Right ventricle myocardium inferior (tissue), 1 donor: ENCODE measurements at regions of chr1 and their contacts with region 1.

Region 1: DNA sequence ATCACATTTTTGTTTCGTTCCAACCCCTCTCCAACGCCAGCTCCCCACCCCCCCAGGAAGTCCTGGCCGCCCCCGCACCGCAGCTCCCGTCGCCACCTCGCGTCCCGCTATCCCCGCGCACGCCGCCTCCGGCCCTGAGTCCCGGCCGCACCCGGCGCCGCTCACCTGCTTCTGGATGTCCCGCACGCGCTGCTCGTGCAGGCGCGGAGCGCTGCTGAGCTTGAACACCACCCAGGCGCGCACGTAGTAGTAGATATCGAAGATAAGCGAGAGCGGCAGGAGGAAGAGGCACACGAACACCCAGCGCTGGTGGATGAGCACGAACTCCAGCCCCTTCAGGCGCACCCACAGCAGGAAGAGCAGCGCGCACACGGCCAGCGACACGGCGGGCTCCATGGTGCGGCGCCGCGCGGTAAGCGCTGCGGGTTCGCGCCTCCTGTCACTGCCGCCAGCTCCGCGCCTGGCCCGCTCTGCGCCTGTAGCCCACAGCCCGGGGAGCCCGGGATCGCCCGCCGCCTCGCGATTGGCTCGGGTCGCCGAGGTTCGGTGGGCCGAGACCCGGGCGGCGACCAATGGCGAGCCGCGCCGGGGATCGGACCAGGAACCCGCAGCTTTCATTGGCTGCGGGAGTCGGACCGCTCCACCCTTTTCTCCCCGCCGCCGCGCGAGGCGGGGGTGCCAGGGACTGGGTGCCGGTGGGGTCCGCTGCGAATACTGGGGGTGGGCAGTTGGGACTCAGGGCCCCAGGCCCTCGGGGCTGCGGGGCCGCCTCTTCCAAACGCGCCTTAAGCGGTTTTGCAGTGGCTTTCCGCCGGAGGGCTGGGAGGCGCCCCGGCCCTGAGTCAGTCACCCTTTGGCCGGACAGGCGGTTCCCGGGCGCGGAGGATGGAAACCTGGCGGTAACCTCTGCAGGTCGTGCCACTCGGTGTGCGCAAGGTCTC is at the start of gene DHCR24:
- DNase-seq: peak; percentile 92
- ATAC-seq: peak; percentile 98
- total RNA-seq, gene DHCR24: 12.0 TPM

Region 2: DNA sequence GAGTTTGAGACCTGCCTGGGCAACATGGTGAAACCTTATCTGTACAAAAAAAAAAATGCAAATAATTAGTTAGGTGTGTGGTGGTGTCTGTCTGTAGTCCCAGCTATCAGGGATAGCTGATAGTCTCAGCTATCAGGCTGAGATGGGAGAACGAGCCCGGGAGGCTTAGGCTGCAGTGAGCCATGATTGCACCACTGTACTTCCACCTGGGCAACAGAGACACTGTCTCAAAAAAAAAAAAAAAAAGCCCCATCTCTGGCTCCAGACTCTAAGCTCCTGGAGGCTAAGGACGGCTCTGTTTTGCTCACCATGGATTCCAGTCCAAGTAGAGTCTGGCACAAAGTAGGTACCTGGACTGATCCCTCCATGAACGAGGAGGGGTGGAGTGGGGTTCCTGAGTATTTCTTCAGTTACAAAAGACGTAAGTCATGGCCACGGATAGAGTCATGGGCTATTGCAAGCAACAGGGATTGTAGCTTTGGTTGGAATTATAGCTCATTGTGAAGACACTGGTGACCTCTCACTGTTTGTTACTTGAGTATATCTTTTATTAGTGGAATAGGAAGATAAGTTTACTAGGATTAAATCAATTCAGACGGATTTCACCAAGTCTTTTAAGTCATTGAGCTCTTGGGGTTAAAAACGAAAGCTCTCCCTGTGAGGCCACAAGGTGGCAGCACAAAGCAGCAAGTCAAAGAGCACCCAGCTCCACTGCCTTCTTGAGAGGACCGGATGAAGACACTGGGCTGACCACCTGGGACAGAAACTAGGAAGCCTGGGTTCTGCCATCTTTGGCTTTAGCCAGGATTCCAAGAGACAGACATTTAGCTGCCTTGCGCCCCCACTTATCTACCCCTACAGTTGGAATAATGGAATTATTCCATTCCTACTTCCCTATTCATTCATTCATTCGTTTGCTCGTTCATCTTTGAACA is 57.9 kb after region 1 on chr1:
- intact Hi-C with region 1: loop called (anchors 5 kb)
- DNase-seq: peak; percentile 72
- ATAC-seq: peak; percentile 55